Natural killer cell (primary cell): ENCODE measurements at regions of chr6 and their contacts with region 1.

Region 1: GRCh38 chr6:138109042-138109997 is 2.1 kb upstream of the PERP start:
- DNase-seq: peak; percentile 69 to 90
- ATAC-seq: peak; percentile 73 to 83 (median 74)
- H3K4me3 ChIP-seq: no peak overlapping the region
- H3K4me3 Mint-ChIP-seq: peak overlapping the region; percentile 38
- H3K27ac ChIP-seq: no peak overlapping the region
- H3K27ac Mint-ChIP-seq: no peak overlapping the region
- H3K4me1 ChIP-seq: peaks cover 13% of the 10 kb centered on the region
- H3K4me1 Mint-ChIP-seq: peaks cover 8 to 23% of the 10 kb centered on the region in 2 donors
- H3K27me3 ChIP-seq: peaks cover 34% of the 10 kb centered on the region
- H3K27me3 Mint-ChIP-seq: peaks cover 44% of the 10 kb centered on the region in 2 donors
- CTCF ChIP-seq: peak; percentile 93

Region 2: DNA sequence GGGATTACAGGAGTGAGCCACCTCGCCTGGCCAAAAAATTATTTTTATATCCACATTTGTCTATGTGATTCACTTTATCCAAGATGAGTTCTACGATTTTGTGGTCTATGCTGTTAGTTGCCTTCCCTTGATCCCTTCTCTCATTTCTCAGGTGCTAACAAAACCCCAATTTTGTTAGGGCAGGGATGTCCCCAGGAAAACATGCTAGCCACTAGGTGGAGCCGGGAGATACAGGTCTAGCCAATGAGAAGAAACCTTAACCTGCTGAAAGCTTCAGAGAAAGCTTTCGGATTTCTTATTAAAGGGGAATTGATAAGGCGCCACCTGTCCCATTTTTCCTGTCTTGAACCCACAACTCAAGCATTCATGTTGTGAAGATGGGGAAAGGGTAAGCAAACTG is 447.7 kb before region 1 on chr6:
- intact Hi-C with region 1: loop called (anchors 10 kb)
- DNase-seq: peak in 1 of 2 donors; percentile 75
- ATAC-seq: peak in 1 of 3 donors; percentile 57
- H3K4me3 ChIP-seq: no peak overlapping the region
- H3K4me3 Mint-ChIP-seq: no peak overlapping the region
- H3K27ac ChIP-seq: no peak overlapping the region
- H3K27ac Mint-ChIP-seq: no peak overlapping the region
- H3K4me1 ChIP-seq: no peaks in the 10 kb centered on the region
- H3K4me1 Mint-ChIP-seq: no peaks in the 10 kb centered on the region
- H3K27me3 ChIP-seq: no peaks in the 10 kb centered on the region
- H3K27me3 Mint-ChIP-seq: peaks cover 10 to 16% of the 10 kb centered on the region in 2 donors
- CTCF ChIP-seq: peak; percentile 40

Region 3: DNA sequence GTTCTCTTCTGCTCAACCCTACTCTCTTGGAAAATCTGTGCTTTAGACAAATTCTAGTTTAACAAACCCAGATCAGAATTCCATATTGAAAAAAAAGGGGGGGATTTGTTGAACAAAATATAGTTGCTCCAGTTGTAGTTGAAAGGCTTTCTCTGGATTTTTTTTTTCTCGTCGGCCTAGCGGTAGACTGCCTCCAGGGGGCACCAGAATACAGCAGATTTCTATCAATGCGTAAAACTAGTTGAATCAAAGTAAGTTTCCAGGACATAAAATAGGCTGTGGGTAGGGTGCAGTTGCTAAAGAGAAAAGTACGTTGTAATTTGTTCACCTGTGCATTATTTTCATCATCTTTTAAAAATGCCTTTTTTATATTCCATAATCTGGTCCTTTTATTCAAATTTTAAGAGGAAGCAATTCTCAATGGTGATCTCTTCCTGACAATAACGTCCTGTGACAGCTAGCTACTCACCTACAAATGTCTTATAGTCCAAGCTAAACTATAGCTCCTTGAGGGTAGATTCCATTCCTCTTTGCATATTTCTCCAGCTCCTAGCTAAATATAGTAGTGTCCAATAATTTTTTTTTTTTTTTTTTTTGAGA is 107.5 kb before region 1 on chr6:
- intact Hi-C with region 1: loop called (anchors 1 kb)
- DNase-seq: peak; percentile 43 to 80
- ATAC-seq: peak; percentile 64 to 80 (median 79)
- H3K4me3 ChIP-seq: no peak overlapping the region
- H3K4me3 Mint-ChIP-seq: no peak overlapping the region
- H3K27ac ChIP-seq: no peak overlapping the region
- H3K27ac Mint-ChIP-seq: no peak overlapping the region
- H3K4me1 ChIP-seq: no peaks in the 10 kb centered on the region
- H3K4me1 Mint-ChIP-seq: peaks cover 0 to 5% of the 10 kb centered on the region in 2 donors
- H3K27me3 ChIP-seq: no peaks in the 10 kb centered on the region
- H3K27me3 Mint-ChIP-seq: peaks cover 4 to 12% of the 10 kb centered on the region in 2 donors
- CTCF ChIP-seq: peak; percentile 96